ENCODE measurements at regions of chr10 and their contacts with region 1.

Region 1: GRCh38 chr10:123008439-123009205 is at the starts of genes ACADSB and IKZF5:
- DNase-seq: peak; percentile 96 to 98 (median 97)
- ATAC-seq: peak; percentile 97 to 99 (median 98)
- H3K4me3 ChIP-seq: peak within 1 kb of the TSS; percentile 66 to 99 (median 90)
- H3K27ac ChIP-seq: peak within 1 kb of the TSS; percentile 69 to 95 (median 88)
- H3K4me1 ChIP-seq: peaks cover 0 to 52% (median 34%) of the 10 kb centered on the region in 12 donors
- H3K27me3 ChIP-seq: no peaks in the 10 kb centered on the region
- CTCF ChIP-seq: no peak
- POLR2A ChIP-seq: peak; percentile 65 to 96
- total RNA-seq, gene ACADSB: 30.3 to 102 (median 60.0) TPM
- total RNA-seq, gene IKZF5: 5.0 to 16.5 (median 8.6) TPM

Region 2: DNA sequence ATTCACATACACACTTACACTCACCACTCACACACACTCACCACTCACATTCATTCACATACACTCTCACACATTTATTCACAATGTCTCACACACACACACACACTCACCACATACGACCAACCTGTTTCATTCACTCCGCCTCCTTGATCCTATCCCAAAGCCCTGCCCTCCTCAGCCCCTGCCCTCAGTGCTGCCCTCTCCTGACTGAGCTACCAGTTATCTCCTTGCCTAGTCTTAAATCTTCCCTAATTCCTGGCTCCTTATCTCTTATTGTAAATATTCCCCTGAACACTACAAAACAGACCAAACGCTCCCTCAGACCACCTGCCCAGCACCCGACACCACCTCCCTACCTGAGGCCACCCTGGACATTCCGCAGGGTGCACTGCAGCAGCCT is 282.9 kb before region 1 on chr10:
- intact Hi-C with region 1: no loop called
- DNase-seq: no peak
- ATAC-seq: no peak
- H3K4me3 ChIP-seq: no peak overlapping the region
- H3K27ac ChIP-seq: no peak overlapping the region
- H3K4me1 ChIP-seq: no peaks in the 10 kb centered on the region
- H3K27me3 ChIP-seq: peaks cover 0 to 34% (median 6%) of the 10 kb centered on the region in 9 donors
- CTCF ChIP-seq: no peak
- POLR2A ChIP-seq: no peak

Region 3: GRCh38 chr10:122980209-122981065 is 28.2 kb before region 1 on chr10 and contains the start of gene PSTK:
- intact Hi-C with region 1: loop called in 2 of 10 experiments (anchors 1 to 2 kb)
- DNase-seq: peak; percentile 91 to 96 (median 94)
- ATAC-seq: peak; percentile 97 to 99 (median 99)
- H3K4me3 ChIP-seq: peak within 1 kb of the TSS; percentile 41 to 92 (median 74)
- H3K27ac ChIP-seq: peak within 1 kb of the TSS; percentile 86 to 96 (median 92)
- H3K4me1 ChIP-seq: peaks cover 0 to 13% (median 6%) of the 10 kb centered on the region in 12 donors
- H3K27me3 ChIP-seq: no peaks in the 10 kb centered on the region
- CTCF ChIP-seq: peak; percentile 86 to 98 (median 95)
- POLR2A ChIP-seq: peak in 1 of 2 donors; percentile 53
- total RNA-seq, gene PSTK: 0.97 to 3.9 (median 2.0) TPM

Region 4: DNA sequence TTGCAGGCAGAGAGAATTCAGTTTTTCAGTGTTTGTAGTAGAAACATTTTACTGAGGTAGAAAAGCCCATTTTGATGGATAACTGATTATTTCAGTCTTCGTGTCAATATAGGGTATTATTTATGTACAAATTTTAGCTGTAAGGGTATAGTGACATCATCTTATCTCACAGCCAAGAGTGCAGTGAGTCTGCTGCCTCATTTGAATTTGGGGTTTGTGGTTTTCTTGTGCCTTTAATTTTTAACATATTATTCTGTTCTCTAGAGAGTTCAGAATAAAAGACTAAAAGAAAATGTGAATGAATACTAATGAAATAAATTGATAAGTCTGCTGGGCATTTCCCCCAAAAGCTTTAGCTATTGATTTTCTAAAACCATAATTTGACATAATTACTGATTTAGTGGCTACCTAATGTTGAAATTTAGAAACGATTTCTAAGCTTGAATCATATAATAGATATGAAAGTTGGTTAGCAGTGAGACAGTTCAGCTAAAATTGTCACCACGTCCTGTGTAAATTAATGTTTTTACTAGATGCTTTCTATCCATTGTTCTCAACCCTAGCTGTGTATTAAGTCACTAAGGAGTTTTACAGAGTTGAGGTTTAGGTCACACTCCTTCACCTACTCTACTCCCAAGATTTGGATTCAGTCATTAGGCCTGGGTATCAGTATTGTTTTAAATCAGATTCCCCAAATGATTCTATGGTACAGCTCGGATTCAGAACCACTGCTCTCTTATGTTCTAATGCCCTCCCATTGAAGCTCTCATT is 37.5 kb after region 1 on chr10:
- intact Hi-C with region 1: no loop called
- DNase-seq: no peak
- ATAC-seq: no peak
- H3K4me3 ChIP-seq: no peak overlapping the region
- H3K27ac ChIP-seq: no peak overlapping the region
- H3K4me1 ChIP-seq: no peaks in the 10 kb centered on the region
- H3K27me3 ChIP-seq: no peaks in the 10 kb centered on the region
- CTCF ChIP-seq: no peak
- POLR2A ChIP-seq: no peak

Region 5: DNA sequence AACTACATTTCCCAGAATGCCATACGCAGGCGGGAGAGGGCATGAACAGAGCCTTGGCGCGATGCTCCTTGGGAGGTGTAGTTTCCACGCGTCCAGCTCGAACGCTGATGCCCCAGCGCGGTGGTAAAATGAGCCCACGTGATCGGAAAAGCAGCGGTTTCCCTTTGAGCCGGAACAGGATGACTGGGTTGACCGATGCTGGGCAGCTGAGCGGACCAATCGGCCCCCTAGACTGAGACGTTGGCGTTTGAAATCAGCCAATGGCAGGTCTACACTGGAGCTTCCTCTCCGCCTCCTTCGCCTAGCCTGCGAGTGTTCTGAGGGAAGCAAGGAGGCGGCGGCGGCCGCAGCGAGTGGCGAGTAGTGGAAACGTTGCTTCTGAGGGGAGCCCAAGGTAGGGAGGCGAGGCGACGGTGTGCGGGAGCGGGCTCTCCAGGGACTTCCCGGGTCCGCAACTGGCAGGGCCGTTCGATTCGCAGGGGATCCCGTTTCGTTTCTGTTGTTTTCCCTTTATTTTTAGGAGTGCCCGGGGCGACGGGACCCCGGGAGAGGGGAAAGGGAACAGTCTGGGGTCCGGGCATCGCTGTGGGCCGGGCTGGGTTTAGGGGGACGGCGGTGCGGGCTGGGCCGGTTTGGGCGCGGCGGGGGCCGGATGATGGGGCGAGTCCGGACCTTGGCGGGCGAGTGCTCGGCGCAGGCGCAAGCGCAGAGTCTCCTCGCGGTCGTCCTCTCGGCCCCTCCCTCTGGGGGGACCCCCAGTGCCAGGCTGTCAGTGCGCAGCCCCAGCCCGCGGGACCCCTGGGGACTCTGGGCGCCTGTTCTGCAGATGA is 145.7 kb after region 1 on chr10 and contains the start of gene BUB3:
- intact Hi-C with region 1: loop called in 5 of 10 experiments (anchors 5 to 10 kb)
- DNase-seq: peak; percentile 97 to 99 (median 99)
- ATAC-seq: peak; percentile 99 to 100 (median 99)
- H3K4me3 ChIP-seq: peak within 1 kb of the TSS; percentile 64 to 99 (median 85)
- H3K27ac ChIP-seq: peak within 1 kb of the TSS; percentile 47 to 96 (median 90)
- H3K4me1 ChIP-seq: peaks cover 4 to 62% (median 35%) of the 10 kb centered on the region in 12 donors
- H3K27me3 ChIP-seq: peaks cover 27 to 44% (median 40%) of the 10 kb centered on the region in 9 donors
- CTCF ChIP-seq: peak in 7 of 12 donors; percentile 9 to 51 (median 26)
- POLR2A ChIP-seq: peak in 1 of 2 donors; percentile 82
- total RNA-seq, gene BUB3: 23.8 to 47.5 (median 38.7) TPM

Measured in heart left ventricle (tissue), 16 donors.